Activated CD4-positive, alpha-beta T cell treated with anti-CD3 and anti-CD28 coated beads for 36 hours (primary cell): ENCODE measurements at regions of chr1 and their contacts with region 1.

Region 1: DNA sequence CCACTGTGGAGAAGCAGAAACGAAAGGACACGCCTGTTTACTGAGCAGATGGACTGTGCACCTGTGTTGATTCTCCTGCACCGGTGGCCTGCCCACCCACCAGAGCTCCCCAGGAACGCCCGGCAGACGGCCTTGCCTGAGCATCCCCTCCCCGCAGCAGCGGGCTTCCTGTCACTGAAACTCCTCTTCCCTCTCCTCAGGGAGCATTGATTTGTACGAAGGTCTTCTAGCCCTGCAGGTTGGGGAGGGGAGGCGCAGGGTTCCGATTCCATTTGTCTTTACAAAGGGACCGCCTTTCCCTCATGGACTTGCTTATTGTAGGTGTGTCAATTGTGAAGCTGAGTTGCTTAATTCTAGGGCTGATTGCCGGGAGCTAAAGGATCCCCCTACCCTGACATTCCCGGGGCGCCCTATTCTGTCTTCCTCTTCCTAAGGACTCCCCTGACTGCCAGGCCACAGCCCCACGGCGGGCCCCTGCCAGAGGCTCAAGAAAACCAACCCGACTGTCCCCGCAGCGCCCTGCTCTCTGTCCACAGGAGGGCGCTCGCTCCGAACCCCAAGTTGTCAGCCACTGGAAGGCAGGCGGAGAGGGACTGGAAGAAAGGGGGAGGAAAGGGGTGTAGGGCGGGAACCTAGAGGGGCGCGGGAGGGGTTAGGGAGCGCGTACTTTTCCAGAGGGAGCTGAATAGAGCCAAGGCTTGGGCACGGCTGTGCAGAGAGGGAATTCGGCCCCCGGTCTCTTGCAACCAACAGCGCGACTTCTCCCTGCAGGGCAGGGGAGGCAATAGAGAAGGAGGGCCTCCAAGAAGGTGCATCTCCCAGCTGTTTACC is 2.8 kb downstream of the S100A6 start:
- DNase-seq: peak; percentile 91
- ATAC-seq: peak; percentile 31
- H3K4me3 Mint-ChIP-seq: peak overlapping the region; percentile 89
- H3K27ac Mint-ChIP-seq: peak overlapping the region; percentile 94
- H3K4me1 Mint-ChIP-seq: peaks cover 58% of the 10 kb centered on the region
- H3K27me3 Mint-ChIP-seq: no peaks in the 10 kb centered on the region

Region 2: GRCh38 chr1:153494976-153495535 is 37.9 kb before region 1 on chr1:
- CTCF ChIA-PET with region 1: interaction called, 10 read pairs
- POLR2A ChIA-PET with region 1: no interaction called
- intact Hi-C with region 1: no loop called
- DNase-seq: peak; percentile 90
- ATAC-seq: peak; percentile 90
- H3K4me3 Mint-ChIP-seq: no peak overlapping the region
- H3K27ac Mint-ChIP-seq: no peak overlapping the region
- H3K4me1 Mint-ChIP-seq: no peaks in the 10 kb centered on the region
- H3K27me3 Mint-ChIP-seq: peaks cover 14% of the 10 kb centered on the region

Region 3: DNA sequence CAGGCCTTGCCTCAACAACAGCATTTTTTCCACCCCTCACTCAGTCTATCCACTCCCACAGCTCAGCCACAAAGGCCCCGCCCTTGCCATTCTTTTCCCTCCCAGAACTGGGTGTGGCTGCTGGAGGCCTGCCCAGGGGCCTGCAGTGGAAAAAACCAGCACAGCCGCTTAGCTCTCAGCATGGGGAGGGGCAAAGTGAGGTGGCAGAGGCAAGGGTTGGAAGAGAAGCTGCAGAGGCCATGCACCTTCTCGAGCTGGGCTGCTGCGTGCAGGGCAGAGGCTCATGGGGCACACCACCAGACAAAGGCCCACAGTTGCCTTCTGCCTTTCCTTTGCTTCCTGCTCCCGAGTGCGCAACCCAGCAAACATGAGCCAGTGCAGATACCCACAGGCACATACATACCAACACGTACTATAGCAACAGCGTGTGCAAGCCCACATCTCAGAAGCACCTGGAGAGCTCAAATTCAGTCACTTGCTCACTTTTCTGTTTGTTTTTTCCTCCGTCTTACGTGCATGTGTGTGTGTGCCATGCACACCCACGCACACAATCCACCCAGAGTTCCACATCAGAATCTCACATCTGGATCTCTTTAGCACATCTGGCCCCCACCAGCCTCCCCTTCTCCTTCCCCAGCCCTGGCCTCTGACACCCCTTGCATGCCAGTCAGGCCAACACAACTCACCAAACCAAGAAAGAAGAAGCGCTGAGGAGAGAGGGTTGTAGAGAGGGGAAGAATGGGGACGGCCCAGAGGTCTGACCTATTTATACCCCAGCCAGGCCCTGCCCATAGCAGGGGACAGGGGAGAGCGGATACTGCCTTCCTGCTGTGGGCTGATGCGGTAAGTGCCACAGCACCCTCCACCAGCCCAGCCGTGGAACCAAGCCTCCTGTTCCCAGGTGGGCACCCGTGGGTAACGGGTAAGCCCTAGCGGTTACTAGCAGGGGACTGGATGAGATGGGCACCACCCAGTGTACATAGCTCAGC is 12.4 kb after region 1 on chr1 and contains the start of gene S100A4:
- CTCF ChIA-PET with region 1: interaction called, 63 read pairs
- POLR2A ChIA-PET with region 1: interaction called, 19 read pairs
- intact Hi-C with region 1: loop called (anchors 1 kb)
- DNase-seq: peak; percentile 97
- ATAC-seq: peak; percentile 83
- H3K4me3 Mint-ChIP-seq: peak within 1 kb of the TSS; percentile 78
- H3K27ac Mint-ChIP-seq: peak within 1 kb of the TSS; percentile 96
- H3K4me1 Mint-ChIP-seq: peaks cover 70% of the 10 kb centered on the region
- H3K27me3 Mint-ChIP-seq: no peaks in the 10 kb centered on the region
- total RNA-seq, gene S100A4: 84.8 to 166 TPM

Region 4: GRCh38 chr1:153617675-153618074 is 84.7 kb after region 1 on chr1:
- CTCF ChIA-PET with region 1: interaction called, 17 read pairs
- POLR2A ChIA-PET with region 1: interaction called, 5 read pairs
- intact Hi-C with region 1: loop called (anchors 1 to 5 kb)
- DNase-seq: peak; percentile 90
- ATAC-seq: peak; percentile 99
- H3K4me3 Mint-ChIP-seq: no peak overlapping the region
- H3K27ac Mint-ChIP-seq: peak overlapping the region; percentile 58
- H3K4me1 Mint-ChIP-seq: peaks cover 20% of the 10 kb centered on the region
- H3K27me3 Mint-ChIP-seq: no peaks in the 10 kb centered on the region

Region 5: GRCh38 chr1:153727463-153728304 is 194.7 kb after region 1 on chr1 and contains the start of gene INTS3:
- CTCF ChIA-PET with region 1: no interaction called
- POLR2A ChIA-PET with region 1: no interaction called
- intact Hi-C with region 1: loop called in 1 of 2 experiments (anchors 5 kb)
- DNase-seq: peak; percentile 99
- ATAC-seq: peak; percentile 99
- H3K4me3 Mint-ChIP-seq: peak within 1 kb of the TSS; percentile 93
- H3K27ac Mint-ChIP-seq: peak within 1 kb of the TSS; percentile 95
- H3K4me1 Mint-ChIP-seq: peaks cover 44% of the 10 kb centered on the region
- H3K27me3 Mint-ChIP-seq: no peaks in the 10 kb centered on the region
- total RNA-seq, gene INTS3: 52.0 to 58.0 TPM